ENCODE measurements at regions of chr16 and their contacts with region 1.

Region 1: DNA sequence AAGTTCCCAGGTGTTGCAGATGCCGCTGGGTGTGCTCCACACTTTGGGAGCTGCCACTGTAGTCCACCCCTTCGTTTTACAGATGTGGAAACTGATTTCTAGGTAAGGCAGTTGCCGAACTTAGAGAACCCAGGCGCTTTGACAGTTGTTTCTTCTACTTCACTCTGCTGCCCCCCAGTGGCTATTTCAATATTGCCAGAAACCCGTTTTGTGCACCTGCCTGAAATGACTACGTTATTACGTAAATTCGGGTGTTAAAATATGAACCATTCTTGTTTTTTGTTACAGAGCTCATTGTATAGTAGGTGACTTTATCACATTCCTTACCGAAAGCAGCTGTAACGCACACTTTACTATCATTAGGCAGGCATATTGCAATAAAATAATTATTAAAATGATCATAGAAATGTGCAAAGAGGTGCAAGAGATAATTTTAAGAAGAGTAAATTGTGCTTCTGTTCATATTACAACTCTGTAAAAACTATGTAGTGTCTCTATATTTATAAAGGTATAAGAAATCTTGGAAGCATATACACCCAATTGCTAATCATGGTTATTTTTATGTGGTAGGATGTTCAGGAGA is 44.9 kb downstream of the OTOA start:
- DNase-seq: peak; percentile 96
- H3K4me3 Mint-ChIP-seq: no peak overlapping the region
- H3K27ac Mint-ChIP-seq: no peak overlapping the region
- H3K4me1 Mint-ChIP-seq: peaks cover 4% of the 10 kb centered on the region
- H3K27me3 Mint-ChIP-seq: no peaks in the 10 kb centered on the region

Region 2: GRCh38 chr16:19737306-19738038 is 1971.2 kb before region 1 on chr16:
- CTCF ChIA-PET with region 1: no interaction called
- intact Hi-C with region 1: no loop called
- DNase-seq: no peak
- H3K4me3 Mint-ChIP-seq: no peak overlapping the region
- H3K27ac Mint-ChIP-seq: no peak overlapping the region
- H3K4me1 Mint-ChIP-seq: no peaks in the 10 kb centered on the region
- H3K27me3 Mint-ChIP-seq: no peaks in the 10 kb centered on the region

Region 3: GRCh38 chr16:21574381-21574780 is 134.2 kb before region 1 on chr16:
- CTCF ChIA-PET with region 1: no interaction called
- intact Hi-C with region 1: no loop called
- DNase-seq: no peak
- H3K4me3 Mint-ChIP-seq: no peak overlapping the region
- H3K27ac Mint-ChIP-seq: no peak overlapping the region
- H3K4me1 Mint-ChIP-seq: no peaks in the 10 kb centered on the region
- H3K27me3 Mint-ChIP-seq: no peaks in the 10 kb centered on the region

Region 4: DNA sequence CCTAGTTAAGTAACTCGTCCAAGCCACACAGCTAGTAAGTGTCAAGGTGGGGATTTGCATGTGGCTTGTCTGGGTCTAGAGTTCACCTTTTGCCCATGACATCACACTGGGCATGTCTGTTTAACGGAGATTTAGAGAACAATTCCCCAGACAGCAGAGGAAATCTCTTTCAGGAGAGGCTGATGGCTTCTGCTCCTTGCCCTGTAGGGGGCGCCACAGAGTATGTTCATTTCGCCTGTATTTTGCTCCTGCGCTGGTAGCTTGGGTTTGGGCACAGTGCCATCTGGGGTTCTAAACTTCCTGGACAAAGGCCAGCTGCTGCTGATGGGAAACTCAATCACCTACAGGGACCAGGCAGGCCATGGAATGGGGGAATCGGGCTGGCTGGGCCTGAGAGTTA is 24.4 kb before region 1 on chr16:
- CTCF ChIA-PET with region 1: interaction called, 10 read pairs
- intact Hi-C with region 1: no loop called
- DNase-seq: peak; percentile 57
- H3K4me3 Mint-ChIP-seq: no peak overlapping the region
- H3K27ac Mint-ChIP-seq: no peak overlapping the region
- H3K4me1 Mint-ChIP-seq: no peaks in the 10 kb centered on the region
- H3K27me3 Mint-ChIP-seq: peaks cover 3% of the 10 kb centered on the region